GM10248 (cell line): ENCODE measurements at regions of chr6 and their contacts with region 1.

Region 1: DNA sequence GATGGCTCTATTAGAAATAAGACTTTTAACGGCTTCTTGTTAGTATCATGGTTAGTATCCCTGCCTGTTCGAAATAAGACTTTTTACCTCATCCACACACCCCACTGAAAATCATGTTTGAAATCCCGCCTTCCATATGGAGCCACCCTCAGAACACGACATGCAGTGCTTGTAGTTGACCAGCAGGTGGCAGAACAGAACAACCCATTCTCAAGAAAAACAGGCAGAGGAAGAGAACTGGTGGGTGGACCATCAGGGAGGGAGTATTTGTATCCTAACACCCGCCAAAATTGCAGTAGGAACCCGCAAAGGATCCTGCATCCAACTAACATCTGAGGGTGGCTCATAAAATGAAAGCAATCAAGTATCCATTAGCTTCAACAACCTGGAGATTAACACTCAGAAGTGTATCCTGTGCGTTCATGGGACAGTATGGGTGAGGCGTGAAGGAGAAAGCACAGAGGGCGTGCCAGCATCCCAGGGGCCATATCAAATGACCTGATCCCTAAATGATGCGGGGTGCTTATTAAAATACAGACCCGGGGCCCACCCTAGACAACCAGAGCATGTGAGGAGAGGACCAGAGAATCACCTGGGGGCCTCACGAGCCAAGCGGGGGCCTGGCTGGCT is 89.6 kb upstream of the NHSL1 start:
- DNase-seq: peak; percentile 68
- CTCF ChIP-seq: peak; percentile 96

Region 2: DNA sequence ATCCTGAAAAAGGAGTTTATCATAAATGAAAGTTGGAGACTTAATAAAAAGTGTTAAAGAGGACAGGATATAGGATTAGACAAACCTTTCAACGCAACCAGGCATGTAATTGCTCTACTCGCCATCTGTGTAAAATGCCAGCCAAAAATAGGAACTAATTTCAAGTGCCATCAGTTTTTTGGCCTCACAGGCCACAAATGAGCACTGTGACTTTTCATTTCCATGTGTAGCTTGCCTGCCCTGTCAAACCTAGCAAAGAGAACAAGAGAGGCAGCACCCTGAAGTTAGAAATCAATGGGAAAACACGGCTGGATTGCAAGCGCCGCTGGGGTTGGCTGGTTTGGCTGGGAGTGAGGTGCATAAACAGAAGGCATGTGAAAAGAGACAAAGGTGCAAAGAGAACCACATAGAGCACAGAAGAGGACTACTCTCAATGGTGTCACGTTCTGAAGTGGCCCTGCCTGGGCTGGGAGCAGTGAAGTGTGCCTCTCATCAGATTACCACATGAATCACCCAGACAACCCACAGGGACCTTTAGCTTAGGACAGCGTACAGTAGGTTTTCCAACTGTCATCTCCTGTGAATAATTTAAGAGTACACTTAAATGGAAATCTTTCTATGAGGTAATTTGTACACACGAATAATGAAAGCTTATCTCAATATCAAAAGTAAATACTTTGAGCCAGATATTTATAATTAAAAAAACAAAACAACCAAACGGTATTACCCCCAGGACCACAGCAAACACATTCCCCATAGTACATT is 11.6 kb before region 1 on chr6:
- CTCF ChIA-PET with region 1: interaction called, 14 read pairs
- POLR2A ChIA-PET with region 1: no interaction called
- DNase-seq: no peak
- CTCF ChIP-seq: no peak

Region 3: DNA sequence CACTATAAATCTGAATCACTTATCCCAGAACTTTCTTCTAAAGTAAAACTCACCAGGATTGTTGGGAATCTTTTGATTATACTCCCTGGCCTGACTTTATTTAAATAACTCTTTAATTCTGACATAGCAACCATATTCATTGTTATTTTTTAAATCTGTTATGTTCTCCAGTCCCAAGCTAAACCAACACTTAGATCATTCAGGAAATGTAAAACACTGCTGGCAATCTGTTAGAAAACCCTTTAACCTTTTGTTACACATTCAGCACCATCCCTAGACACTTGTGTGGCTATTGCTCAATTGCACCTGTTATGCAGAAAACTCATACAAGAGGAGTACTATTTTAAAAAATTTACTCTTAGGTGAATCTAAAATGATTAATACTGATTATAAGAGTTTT is 12.2 kb after region 1 on chr6:
- CTCF ChIA-PET with region 1: interaction called, 20 read pairs
- POLR2A ChIA-PET with region 1: no interaction called
- DNase-seq: no peak
- CTCF ChIP-seq: no peak

Region 4: DNA sequence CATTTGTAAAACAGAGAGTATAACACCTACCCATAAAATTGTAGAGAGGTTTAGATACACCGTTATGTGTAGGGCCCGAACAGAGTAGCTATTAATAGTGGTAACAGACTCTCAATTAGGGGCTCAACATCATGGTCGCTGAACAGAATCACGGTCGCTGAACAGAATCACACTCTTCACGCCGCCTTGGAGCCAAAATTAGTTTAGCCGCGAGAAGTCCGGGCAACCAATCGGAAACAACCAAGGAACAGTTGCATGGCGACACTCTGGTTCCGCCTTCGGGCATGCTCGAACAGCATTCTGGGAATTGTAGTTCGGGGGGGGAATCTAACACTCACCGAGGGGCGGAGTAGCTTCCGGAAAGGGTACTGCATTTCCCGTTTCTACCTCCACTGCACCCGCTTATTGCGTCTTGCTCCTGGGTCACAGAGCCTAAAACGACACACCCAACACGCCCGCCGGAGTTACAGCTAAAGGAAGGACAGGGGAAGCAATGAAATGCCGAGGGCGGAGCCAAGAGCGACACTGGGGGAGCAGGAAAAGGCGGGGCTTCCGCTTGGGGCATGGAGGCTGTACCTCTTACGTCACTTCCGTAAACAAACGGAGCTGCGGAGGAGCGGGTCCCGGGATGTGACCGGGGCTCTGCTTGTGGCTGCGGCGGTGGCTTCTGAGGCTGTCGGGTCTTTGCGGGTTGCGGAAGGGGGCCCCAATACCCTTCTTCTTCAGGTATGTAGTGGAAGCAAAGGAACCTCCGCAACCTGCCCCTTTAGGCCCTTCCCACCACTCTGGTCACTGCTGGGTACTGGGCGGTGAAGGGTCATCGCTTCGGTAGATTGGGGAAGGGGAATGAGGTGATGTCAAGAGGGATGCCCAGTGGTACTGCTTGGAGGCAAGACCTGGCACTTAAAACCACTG is 184.5 kb after region 1 on chr6 and contains the start of gene CCDC28A:
- CTCF ChIA-PET with region 1: interaction called, 264 read pairs
- POLR2A ChIA-PET with region 1: no interaction called
- DNase-seq: peak; percentile 90
- CTCF ChIP-seq: no peak